Brain microvascular endothelial cell (primary cell): ENCODE measurements at regions of chr4 and their contacts with region 1.

Region 1: GRCh38 chr4:87108142-87108546 is 112.3 kb downstream of the KLHL8 start:
- DNase-seq: peak; percentile 90
- H3K4me3 ChIP-seq: no peak overlapping the region
- H3K27ac ChIP-seq: peak overlapping the region; percentile 45
- H3K27me3 ChIP-seq: no peaks in the 10 kb centered on the region
- CTCF ChIP-seq: peak; percentile 32

Region 2: GRCh38 chr4:86934771-86935565 is 173.2 kb before region 1 on chr4 and contains the start of gene AFF1:
- in situ Hi-C with region 1: loop called (anchors 25 kb)
- DNase-seq: peak; percentile 71
- H3K4me3 ChIP-seq: peak within 1 kb of the TSS; percentile 83
- H3K27ac ChIP-seq: peak within 1 kb of the TSS; percentile 75
- H3K27me3 ChIP-seq: no peaks in the 10 kb centered on the region
- CTCF ChIP-seq: peak; percentile 45

Region 3: DNA sequence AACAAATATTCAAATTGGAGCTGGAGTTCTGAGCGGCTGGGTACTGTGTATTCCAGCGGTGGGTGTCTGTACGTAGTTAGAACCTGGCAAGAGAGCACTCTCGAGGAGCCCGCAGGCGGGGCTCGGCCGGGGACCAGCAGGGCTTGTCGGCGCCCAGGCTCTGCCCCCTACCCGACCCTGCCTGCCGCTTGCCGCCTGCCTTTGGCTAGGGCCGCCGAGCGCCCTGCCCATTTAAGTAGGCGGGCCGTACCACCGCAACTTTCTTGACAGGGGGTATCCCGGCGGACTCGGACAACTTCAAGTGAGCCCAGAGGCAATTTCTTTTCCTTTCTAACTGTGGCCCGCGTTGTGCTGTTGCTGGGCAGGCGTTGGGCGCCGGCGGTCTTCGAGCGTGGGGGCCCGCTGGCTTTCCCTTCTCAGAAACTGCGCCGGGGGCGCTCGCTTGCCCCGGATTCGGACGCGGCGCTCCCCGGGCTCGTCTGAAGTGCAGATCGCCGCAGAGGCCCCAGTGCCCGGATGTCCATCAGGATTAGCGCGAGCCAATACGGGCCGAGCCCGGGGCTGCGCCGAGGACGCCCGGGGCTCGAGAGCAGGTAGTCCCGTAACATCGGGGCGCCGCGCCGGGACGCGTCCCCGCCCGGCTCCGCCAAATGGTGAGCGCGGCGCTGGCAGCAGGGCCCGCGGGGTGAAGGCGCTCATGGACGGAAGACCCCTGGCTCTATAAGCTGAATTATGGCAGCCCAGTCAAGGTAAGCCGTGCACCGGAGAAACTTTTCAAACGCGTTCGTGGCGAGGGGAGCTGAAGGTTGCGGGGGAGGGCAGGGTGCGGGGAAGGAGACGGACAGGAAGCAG is 101.2 kb before region 1 on chr4:
- in situ Hi-C with region 1: no loop called
- DNase-seq: peak; percentile 90
- H3K4me3 ChIP-seq: peak overlapping the region; percentile 86
- H3K27ac ChIP-seq: peak overlapping the region; percentile 99
- H3K27me3 ChIP-seq: no peaks in the 10 kb centered on the region
- CTCF ChIP-seq: no peak